Posterior cingulate gyrus (tissue), 11 donors: ENCODE measurements at regions of chr17 and their contacts with region 1.

Region 1: DNA sequence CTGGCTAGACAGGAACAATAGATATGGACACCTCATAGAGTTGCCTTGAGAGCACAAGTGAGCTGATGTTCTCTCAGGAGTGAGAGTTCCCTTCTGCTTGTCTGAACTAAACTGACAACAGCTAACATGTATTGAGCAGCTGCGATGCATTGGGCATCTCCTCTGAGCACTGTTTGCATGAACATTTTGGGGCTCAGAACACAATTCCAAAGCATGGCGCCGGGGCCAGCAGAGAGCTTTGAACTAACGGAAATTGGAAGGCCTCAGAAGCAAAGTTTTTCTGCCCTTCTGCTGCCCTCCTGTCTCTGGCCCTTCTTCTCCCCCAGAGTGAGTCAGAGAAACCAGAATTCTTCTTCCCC is 38.1 kb downstream of the TRPV2 start:
- DNase-seq: peak in 1 of 10 donors; percentile 50

Region 2: GRCh38 chr17:16491703-16492612 is 38.5 kb after region 1 on chr17 and contains the start of gene LRRC75A:
- intact Hi-C with region 1: loop called (anchors 5 kb)
- DNase-seq: peak in 5 of 10 donors; percentile 33 to 89 (median 78)